A673 (cell line): ENCODE measurements at regions of chr12 and their contacts with region 1.

Region 1: DNA sequence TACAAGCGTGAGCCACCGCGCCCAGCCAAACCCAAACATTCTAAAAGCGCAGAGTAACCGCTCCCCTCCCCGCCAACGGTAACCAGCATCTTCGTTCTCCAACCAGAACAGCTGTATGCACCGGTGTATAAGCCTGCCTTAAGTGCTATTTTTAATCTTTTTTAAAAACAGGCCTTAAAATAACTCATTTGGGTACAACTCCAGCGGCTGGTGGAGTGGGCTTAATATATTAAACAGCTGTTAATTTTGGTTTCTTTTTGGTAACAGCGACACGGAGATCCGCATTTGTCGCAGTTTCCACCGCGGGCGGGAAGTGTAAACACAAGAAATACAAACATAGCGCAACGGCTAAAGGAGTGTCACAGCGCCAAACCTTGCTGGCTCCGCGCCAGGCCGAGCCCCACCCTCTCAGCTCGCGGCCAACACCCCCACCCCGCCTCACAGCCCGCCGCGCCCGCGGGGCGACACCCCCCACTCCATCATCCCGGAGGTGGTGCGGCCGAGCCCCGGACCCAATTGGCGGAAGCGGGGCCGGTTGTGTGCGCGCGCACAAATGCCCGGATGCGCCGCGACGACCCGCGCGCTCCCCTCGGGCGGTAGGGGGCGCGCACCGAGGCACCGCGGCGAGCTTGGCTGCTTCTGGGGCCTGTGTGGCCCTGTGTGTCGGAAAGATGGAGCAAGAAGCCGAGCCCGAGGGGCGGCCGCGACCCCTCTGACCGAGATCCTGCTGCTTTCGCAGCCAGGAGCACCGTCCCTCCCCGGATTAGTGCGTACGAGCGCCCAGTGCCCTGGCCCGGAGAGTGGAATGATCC is at the start of gene MDM2:
- DNase-seq: peak; percentile 95
- H3K4me3 ChIP-seq: peak within 1 kb of the TSS; percentile 99
- H3K27ac ChIP-seq: peak within 1 kb of the TSS; percentile 97
- H3K4me1 ChIP-seq: no peaks in the 10 kb centered on the region
- H3K27me3 ChIP-seq: no peaks in the 10 kb centered on the region
- CTCF ChIP-seq: peak; percentile 71
- total RNA-seq, gene MDM2: 132 and 149 TPM in 2 replicates

Region 2: DNA sequence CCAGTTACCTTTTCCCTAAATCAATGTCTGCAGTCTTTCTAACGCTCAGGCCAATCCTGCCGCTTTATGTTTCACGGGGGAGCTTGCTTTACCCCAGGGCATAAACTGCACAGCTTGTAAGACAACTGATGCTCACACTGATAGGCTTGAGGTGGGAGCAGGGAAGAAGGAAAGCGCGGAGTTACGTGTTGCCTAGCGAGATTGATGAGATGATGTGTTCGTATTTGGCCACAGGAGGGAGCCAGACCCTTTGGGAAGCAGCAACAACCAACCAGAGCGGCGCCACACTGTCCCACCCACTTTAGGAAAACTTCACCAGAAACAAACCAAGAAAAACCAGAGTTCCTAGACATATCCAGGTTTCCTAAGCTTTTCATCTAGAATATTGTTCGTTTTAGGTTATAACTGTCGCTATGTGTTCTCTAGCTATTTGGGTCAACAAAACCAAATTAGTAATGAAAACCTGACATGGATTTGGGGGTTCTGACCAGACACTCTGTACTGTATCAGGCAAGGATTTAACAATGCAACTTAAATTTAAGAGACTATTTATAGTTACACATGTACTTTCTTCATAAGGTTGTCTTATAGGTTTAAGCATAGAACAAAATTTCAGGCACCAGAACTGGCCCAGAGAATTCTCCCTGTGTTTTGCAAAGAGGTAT is 584.6 kb before region 1 on chr12:
- CTCF ChIA-PET with region 1: no interaction called
- POLR2A ChIA-PET with region 1: no interaction called
- intact Hi-C with region 1: loop called (anchors 10 kb)
- DNase-seq: peak; percentile 88
- H3K4me3 ChIP-seq: no peak overlapping the region
- H3K27ac ChIP-seq: no peak overlapping the region
- H3K4me1 ChIP-seq: no peaks in the 10 kb centered on the region
- H3K27me3 ChIP-seq: peaks cover 34% of the 10 kb centered on the region
- CTCF ChIP-seq: peak; percentile 90

Region 3: DNA sequence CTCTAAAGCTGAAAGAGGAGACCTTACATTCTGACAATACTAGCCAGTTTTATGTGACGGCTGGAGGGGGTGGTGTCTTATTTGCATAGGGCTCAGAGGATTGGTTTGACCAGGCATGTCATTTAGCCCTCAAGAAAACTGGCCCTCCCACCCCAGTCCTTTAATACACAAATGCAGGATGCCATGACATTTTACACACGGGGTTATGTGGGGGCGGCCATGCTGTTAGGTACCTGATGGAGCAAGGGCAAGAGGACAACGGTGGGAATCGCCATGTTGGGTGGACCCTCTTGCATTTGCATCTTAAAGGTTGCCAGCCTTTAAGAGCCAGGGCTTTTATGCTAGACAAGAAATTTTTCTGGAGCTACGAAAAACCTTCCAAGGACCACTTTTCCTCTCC is 23.5 kb after region 1 on chr12:
- CTCF ChIA-PET with region 1: interaction called, 11 read pairs
- POLR2A ChIA-PET with region 1: no interaction called
- intact Hi-C with region 1: no loop called
- DNase-seq: peak; percentile 26
- H3K4me3 ChIP-seq: no peak overlapping the region
- H3K27ac ChIP-seq: no peak overlapping the region
- H3K4me1 ChIP-seq: peaks cover 15% of the 10 kb centered on the region
- H3K27me3 ChIP-seq: no peaks in the 10 kb centered on the region
- CTCF ChIP-seq: no peak

Region 4: GRCh38 chr12:69161829-69162228 is 354.0 kb after region 1 on chr12:
- CTCF ChIA-PET with region 1: no interaction called
- POLR2A ChIA-PET with region 1: no interaction called
- intact Hi-C with region 1: no loop called
- DNase-seq: peak; percentile 15
- H3K4me3 ChIP-seq: no peak overlapping the region
- H3K27ac ChIP-seq: no peak overlapping the region
- H3K4me1 ChIP-seq: no peaks in the 10 kb centered on the region
- H3K27me3 ChIP-seq: no peaks in the 10 kb centered on the region
- CTCF ChIP-seq: no peak